Common myeloid progenitor, CD34-positive (primary cell): ENCODE measurements at regions of chr4 and their contacts with region 1.

Region 1: DNA sequence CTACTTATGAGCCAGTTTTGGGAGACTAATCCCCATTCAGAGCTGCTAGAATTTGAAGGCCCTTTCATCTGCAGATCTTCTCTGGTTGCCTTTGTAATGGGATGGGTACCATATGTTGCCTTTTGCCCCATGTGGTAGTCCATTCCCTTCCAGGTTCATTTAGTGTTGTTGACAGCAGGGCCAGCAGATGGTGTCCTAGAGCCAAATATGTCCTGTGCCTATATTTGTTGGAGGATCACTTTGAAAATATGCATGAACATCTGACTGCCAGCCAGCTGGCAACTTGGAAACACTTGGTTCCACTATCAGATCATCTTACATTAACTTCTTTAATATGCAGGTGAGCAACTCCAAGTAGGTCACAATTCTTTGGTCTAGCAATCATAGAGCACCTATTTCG is 30.4 kb downstream of the CFAP299 start:
- DNase-seq: peak; percentile 50 to 79 (median 70)
- H3K4me3 ChIP-seq: no peak overlapping the region
- H3K27ac ChIP-seq: no peak overlapping the region
- H3K4me1 ChIP-seq: no peaks in the 10 kb centered on the region
- H3K27me3 ChIP-seq: peaks cover 0 to 7% (median 1%) of the 10 kb centered on the region in 5 experiments

Region 2: DNA sequence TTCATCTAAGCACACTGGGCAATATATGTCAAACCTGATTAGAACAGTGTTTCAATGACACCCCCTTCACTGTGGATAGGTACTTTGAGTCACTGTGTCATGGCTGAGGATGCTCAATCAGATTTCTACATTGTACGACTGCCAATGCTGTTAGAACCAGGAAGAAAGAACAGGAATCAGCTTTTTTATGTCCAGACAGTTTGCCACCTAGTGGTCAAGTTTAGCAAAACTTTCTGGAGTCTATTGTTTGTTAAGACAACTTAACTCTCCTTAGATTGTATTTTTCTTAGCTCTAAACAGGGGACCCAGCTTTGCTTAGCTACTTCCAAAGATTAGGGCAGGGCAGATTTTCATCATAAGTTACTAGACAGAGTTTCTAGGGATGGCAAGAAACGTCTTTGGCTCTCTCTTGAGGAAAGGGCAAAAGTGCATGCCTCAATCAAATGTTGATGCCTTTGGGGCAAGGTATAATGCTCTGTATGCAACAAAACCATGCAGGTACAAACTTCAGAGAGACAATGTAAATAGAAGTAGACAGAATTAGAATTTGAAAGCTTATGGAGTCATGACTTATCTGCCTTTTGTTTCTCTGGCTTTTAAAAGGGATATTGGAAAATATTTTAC is 624.1 kb after region 1 on chr4:
- CTCF ChIA-PET with region 1: interaction called, 15 read pairs
- POLR2A ChIA-PET with region 1: no interaction called
- DNase-seq: peak; percentile 56 to 79 (median 68)
- H3K4me3 ChIP-seq: no peak overlapping the region
- H3K27ac ChIP-seq: no peak overlapping the region
- H3K4me1 ChIP-seq: no peaks in the 10 kb centered on the region
- H3K27me3 ChIP-seq: no peaks in the 10 kb centered on the region

Region 3: DNA sequence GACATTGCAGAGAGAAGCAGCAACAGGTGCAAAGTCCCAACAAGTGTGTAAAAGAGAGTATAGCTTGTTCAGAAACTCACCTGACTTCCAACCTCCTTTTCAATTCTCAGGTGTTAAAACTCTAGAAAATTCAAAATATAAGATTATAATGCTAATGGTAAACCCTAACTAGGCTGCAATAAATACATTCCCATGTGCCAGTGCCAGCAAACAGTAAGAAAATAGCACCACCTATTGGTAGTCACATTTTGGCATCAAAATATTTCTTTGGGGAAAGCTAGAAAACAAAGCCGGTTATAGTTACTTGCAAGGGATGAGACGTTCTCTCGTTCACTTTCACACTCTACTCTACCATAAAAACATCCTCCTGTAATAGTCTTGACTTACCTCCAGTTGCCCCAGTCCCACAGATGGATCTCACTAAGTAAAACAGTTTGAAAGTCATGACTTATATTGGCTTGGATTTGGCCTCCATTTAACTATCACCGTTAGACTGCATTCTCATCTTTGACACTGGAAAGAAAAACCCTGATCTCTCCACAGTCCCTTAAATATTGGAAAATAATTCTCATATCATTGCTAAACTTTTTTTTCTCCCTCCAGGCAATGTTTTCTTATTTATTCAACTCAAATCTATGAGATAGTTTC is 674.2 kb after region 1 on chr4:
- CTCF ChIA-PET with region 1: interaction called, 25 read pairs
- POLR2A ChIA-PET with region 1: no interaction called
- DNase-seq: peak; percentile 31 to 63 (median 56)
- H3K4me3 ChIP-seq: no peak overlapping the region
- H3K27ac ChIP-seq: no peak overlapping the region
- H3K4me1 ChIP-seq: peaks cover 0 to 2% (median 0%) of the 10 kb centered on the region in 4 experiments
- H3K27me3 ChIP-seq: peaks cover 0 to 21% (median 5%) of the 10 kb centered on the region in 5 experiments

Region 4: GRCh38 chr4:81052119-81053068 is 686.5 kb after region 1 on chr4:
- CTCF ChIA-PET with region 1: interaction called, 14 read pairs
- POLR2A ChIA-PET with region 1: no interaction called
- DNase-seq: peak; percentile 56 to 73 (median 61)
- H3K4me3 ChIP-seq: no peak overlapping the region
- H3K27ac ChIP-seq: no peak overlapping the region
- H3K4me1 ChIP-seq: peaks cover 0 to 2% (median 0%) of the 10 kb centered on the region in 4 experiments
- H3K27me3 ChIP-seq: no peaks in the 10 kb centered on the region